ENCODE measurements at regions of chr1 and their contacts with region 1.

Region 1: GRCh38 chr1:109984456-109985275 is at the start of gene AHCYL1:
- DNase-seq: peak; percentile 100
- H3K4me3 ChIP-seq: peak within 1 kb of the TSS; percentile 69 to 86 (median 84)
- H3K27ac ChIP-seq: peak within 1 kb of the TSS; percentile 93 to 98 (median 96)
- H3K4me1 ChIP-seq: peaks cover 24 to 57% (median 43%) of the 10 kb centered on the region in 4 donors
- H3K27me3 ChIP-seq: no peaks in the 10 kb centered on the region
- CTCF ChIP-seq: peak; percentile 93 to 100 (median 98)
- EP300 ChIP-seq: no peak
- POLR2A ChIP-seq: peak; percentile 99
- total RNA-seq, gene AHCYL1: 31.8 to 71.5 (median 51.3) TPM

Region 2: GRCh38 chr1:109548321-109549267 is 436.1 kb before region 1 on chr1 and contains the start of gene GNAI3:
- in situ Hi-C with region 1: loop called (anchors 10 to 25 kb)
- intact Hi-C with region 1: no loop called
- DNase-seq: peak; percentile 99
- H3K4me3 ChIP-seq: peak within 1 kb of the TSS; percentile 65 to 94 (median 85)
- H3K27ac ChIP-seq: peak within 1 kb of the TSS; percentile 95 to 98 (median 97)
- H3K4me1 ChIP-seq: peaks cover 9 to 55% (median 30%) of the 10 kb centered on the region in 4 donors
- H3K27me3 ChIP-seq: no peaks in the 10 kb centered on the region
- CTCF ChIP-seq: peak in 1 of 5 experiments; percentile 12
- EP300 ChIP-seq: no peak
- POLR2A ChIP-seq: peak; percentile 100
- total RNA-seq, gene GNAI3: 2.2 to 7.5 (median 5.1) TPM

Region 3: GRCh38 chr1:109630081-109630897 is 354.4 kb before region 1 on chr1:
- in situ Hi-C with region 1: loop called in 1 of 4 experiments (anchors 10 kb)
- intact Hi-C with region 1: no loop called
- DNase-seq: no peak
- H3K4me3 ChIP-seq: no peak overlapping the region
- H3K27ac ChIP-seq: no peak overlapping the region
- H3K4me1 ChIP-seq: peaks cover 3 to 20% (median 10%) of the 10 kb centered on the region in 4 donors
- H3K27me3 ChIP-seq: no peaks in the 10 kb centered on the region
- CTCF ChIP-seq: peak in 3 of 5 experiments; percentile 39 to 48 (median 45)
- EP300 ChIP-seq: no peak
- POLR2A ChIP-seq: no peak

Region 4: DNA sequence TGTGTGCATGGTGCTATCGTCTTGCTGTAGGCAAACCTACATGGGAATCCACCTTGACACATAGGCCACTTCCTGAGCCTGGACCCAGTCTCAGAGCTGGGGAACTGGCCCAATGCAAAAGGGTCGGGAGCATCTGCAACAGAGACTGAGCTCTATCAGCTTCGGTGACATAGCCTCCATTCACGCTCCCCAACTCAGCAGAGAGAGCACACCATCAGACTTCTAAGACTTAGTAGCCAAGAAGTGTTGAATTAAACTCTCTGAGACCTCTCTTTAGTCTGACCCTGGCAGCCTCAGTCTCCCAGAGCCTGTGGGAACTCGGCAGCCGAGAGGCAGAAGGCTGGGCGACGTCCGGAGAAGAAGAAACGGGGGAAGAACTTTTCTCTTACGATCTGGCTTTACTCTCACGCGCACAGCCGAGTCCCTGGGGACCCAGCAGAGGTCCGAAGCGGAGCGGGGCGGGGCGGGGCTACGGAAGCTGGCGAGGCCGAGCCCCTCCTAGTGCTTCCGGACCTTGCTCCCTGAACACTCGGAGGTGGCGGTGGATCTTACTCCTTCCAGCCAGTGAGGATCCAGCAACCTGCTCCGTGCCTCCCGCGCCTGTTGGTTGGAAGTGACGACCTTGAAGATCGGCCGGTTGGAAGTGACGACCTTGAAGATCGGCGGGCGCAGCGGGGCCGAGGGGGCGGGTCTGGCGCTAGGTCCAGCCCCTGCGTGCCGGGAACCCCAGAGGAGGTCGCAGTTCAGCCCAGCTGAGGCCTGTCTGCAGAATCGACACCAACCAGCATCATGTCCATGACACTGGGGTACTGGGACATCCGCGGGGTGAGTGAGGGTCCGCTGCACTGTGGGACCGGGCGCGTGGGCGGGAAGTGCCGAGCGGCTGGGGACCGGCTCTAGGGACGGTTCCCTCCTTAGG is 328.8 kb before region 1 on chr1 and contains the start of gene GSTM4:
- in situ Hi-C with region 1: loop called in 3 of 4 experiments (anchors 10 to 25 kb)
- intact Hi-C with region 1: loop called (anchors 10 kb)
- DNase-seq: peak; percentile 93
- H3K4me3 ChIP-seq: peak within 1 kb of the TSS; percentile 12 to 68 (median 56)
- H3K27ac ChIP-seq: peak within 1 kb of the TSS; percentile 81 to 88 (median 86)
- H3K4me1 ChIP-seq: peaks cover 7 to 14% (median 10%) of the 10 kb centered on the region in 4 donors
- H3K27me3 ChIP-seq: no peaks in the 10 kb centered on the region
- CTCF ChIP-seq: no peak
- EP300 ChIP-seq: no peak
- POLR2A ChIP-seq: peak; percentile 87
- total RNA-seq, gene GSTM4: 64.9 to 104 (median 94.8) TPM

Region 5: GRCh38 chr1:109923131-109923945 is 61.3 kb before region 1 on chr1:
- in situ Hi-C with region 1: loop called in 1 of 4 experiments (anchors 5 kb)
- intact Hi-C with region 1: loop called (anchors 10 kb)
- DNase-seq: peak; percentile 33
- H3K4me3 ChIP-seq: no peak overlapping the region
- H3K27ac ChIP-seq: peak overlapping the region in 3 of 4 donors; percentile 0 to 29 (median 28)
- H3K4me1 ChIP-seq: peaks cover 10 to 25% (median 14%) of the 10 kb centered on the region in 4 donors
- H3K27me3 ChIP-seq: no peaks in the 10 kb centered on the region
- CTCF ChIP-seq: peak; percentile 33 to 53 (median 48)
- EP300 ChIP-seq: no peak
- POLR2A ChIP-seq: no peak

Measured in transverse colon (tissue), 4 donors.